ENCODE measurements at regions of chr2 and their contacts with region 1.

Region 1: GRCh38 chr2:171307560-171307959 is 126.2 kb downstream of the METTL8 start:
- DNase-seq: no peak
- ATAC-seq: peak; percentile 57
- H3K4me3 Mint-ChIP-seq: no peak overlapping the region
- H3K27ac Mint-ChIP-seq: no peak overlapping the region
- H3K4me1 Mint-ChIP-seq: peaks cover 14% of the 10 kb centered on the region
- H3K27me3 Mint-ChIP-seq: no peaks in the 10 kb centered on the region
- CTCF ChIP-seq: no peak

Region 2: DNA sequence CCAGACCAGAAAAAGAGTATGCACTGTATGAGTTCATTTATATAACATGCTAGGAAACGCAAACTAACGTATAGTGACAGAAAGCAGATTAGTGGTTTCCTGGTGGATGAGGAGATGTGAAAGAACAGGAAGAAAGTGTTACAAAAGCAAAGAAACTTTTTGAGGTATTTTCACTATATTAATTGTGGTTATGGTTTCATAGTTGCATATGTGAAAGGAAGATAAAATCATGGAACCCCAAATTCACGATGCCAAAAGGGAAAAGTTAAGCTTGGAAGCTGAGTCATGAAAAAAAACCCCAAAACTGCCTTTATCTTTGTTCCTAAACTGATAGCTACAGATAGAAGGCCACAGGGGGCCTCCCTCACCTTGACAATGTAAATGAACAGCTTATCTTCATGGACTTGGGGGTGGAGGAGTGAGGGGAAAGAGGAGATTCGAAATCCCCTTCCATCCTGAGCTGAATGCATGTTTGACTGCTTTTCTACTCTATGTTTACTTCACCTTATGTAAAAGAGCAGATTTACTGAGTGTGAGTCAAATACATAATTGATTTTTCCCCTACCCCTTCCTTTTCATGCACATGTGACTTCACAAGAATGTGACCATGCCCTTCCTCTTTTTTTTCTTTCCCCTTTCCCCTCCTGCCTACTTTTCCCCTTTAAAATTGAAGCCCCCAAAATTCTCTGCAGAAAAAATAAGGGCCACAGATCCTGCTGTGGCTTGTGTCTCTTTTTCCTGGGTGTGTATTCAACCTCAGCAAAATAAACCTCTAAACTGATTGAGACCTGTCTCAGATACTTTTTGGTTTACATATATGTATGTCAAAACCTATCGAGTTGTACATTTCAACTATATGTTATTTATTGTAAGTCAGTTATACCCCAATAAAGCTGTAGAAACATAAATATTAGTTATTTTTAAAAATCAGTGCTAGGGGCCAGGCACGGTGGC is 46.8 kb before region 1 on chr2:
- CTCF ChIA-PET with region 1: no interaction called
- POLR2A ChIA-PET with region 1: interaction called, 15 read pairs
- intact Hi-C with region 1: no loop called
- DNase-seq: no peak
- ATAC-seq: peak; percentile 52
- H3K4me3 Mint-ChIP-seq: peak overlapping the region; percentile 5
- H3K27ac Mint-ChIP-seq: peak overlapping the region; percentile 82
- H3K4me1 Mint-ChIP-seq: peaks cover 25% of the 10 kb centered on the region
- H3K27me3 Mint-ChIP-seq: no peaks in the 10 kb centered on the region
- CTCF ChIP-seq: no peak

Region 3: DNA sequence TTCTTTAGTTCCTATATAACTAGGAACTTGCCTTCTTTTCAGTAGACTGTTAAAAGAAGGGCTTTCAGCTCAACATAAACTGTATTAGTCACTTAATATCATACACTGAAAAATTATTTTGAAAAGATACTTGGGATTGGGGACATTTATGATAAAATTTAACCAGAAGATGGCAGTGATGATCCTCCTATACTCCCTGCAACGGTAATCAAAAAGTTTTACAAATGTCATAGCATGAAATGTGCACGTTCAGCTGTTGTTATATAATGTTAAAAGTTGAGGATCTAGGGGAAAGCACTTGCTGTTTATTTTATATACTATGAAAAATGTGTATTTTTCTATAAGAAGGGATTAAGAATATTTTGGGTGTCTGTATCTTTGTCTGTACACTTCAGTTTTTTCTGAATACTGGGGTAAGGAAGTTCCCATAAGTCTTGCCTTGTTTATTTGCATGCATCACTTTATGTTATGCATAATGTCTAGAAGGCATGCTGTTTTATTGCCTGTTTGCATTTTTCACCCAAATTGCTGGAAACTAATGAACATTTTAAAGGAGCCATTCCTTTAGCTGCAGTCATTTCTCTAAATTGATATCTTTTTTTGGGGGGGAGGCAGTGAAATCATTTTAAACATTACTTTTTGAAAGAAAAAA is 398.7 kb after region 1 on chr2:
- CTCF ChIA-PET with region 1: no interaction called
- POLR2A ChIA-PET with region 1: no interaction called
- intact Hi-C with region 1: no loop called
- DNase-seq: no peak
- ATAC-seq: no peak
- H3K4me3 Mint-ChIP-seq: no peak overlapping the region
- H3K27ac Mint-ChIP-seq: no peak overlapping the region
- H3K4me1 Mint-ChIP-seq: peaks cover 18% of the 10 kb centered on the region
- H3K27me3 Mint-ChIP-seq: no peaks in the 10 kb centered on the region
- CTCF ChIP-seq: no peak

Measured in activated B cell treated with CpG ODN at 0.5 μM for 24 hours (primary cell).